PC-3 (cell line): ENCODE measurements at regions of chr10 and their contacts with region 1.

Region 1: GRCh38 chr10:63707254-63707910 is 186.2 kb downstream of the REEP3 start:
- DNase-seq: peak; percentile 100
- ATAC-seq: peak; percentile 70
- H3K4me3 ChIP-seq: no peak overlapping the region
- H3K27ac ChIP-seq: peak overlapping the region; percentile 76
- H3K4me1 ChIP-seq: peaks cover 62% of the 10 kb centered on the region
- H3K27me3 ChIP-seq: no peaks in the 10 kb centered on the region
- CTCF ChIP-seq: no peak

Region 2: DNA sequence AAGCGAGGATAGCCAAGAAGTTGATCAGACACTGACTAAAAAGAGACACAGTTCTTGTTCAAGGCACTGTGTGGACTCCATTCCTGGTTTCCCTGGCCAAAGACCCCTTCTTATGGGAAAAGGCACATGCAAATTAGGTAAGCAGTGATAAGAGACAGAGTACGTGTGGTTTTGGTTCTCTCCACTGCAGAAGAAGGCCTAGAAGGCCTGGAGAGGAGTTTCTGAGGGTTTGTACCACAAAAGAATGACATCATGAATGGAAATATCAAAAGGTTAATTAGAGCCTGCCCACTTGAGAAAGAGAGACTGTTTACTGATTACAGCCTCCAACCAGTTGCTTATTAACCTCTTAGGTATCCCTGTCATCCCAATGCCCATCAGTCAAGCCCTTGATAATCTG is 1195.7 kb before region 1 on chr10:
- CTCF ChIA-PET with region 1: no interaction called
- POLR2A ChIA-PET with region 1: no interaction called
- intact Hi-C with region 1: no loop called
- DNase-seq: no peak
- ATAC-seq: no peak
- H3K4me3 ChIP-seq: no peak overlapping the region
- H3K27ac ChIP-seq: no peak overlapping the region
- H3K4me1 ChIP-seq: peaks cover 14% of the 10 kb centered on the region
- H3K27me3 ChIP-seq: no peaks in the 10 kb centered on the region
- CTCF ChIP-seq: no peak

Region 3: DNA sequence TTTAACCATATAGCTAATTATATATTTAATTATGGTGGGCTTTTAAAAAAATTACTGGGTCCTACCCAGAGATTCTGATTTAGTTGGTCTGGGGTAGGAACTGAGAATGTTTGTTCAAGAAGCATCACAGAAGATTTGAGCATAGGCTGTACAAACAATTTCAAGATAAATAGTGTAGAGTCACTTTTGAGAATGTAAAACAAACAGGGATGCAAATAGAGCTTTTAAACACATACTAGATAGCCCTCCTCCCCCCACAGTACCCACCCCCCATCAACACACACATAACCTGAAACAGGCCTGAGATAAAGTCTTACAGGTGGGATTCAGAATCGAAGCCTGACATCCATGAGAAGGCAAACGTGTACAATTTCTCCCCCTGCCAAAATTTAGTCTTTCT is 201.8 kb before region 1 on chr10:
- CTCF ChIA-PET with region 1: interaction called, 10 read pairs
- POLR2A ChIA-PET with region 1: no interaction called
- intact Hi-C with region 1: no loop called
- DNase-seq: no peak
- ATAC-seq: peak; percentile 53
- H3K4me3 ChIP-seq: no peak overlapping the region
- H3K27ac ChIP-seq: no peak overlapping the region
- H3K4me1 ChIP-seq: peaks cover 11% of the 10 kb centered on the region
- H3K27me3 ChIP-seq: no peaks in the 10 kb centered on the region
- CTCF ChIP-seq: no peak

Region 4: DNA sequence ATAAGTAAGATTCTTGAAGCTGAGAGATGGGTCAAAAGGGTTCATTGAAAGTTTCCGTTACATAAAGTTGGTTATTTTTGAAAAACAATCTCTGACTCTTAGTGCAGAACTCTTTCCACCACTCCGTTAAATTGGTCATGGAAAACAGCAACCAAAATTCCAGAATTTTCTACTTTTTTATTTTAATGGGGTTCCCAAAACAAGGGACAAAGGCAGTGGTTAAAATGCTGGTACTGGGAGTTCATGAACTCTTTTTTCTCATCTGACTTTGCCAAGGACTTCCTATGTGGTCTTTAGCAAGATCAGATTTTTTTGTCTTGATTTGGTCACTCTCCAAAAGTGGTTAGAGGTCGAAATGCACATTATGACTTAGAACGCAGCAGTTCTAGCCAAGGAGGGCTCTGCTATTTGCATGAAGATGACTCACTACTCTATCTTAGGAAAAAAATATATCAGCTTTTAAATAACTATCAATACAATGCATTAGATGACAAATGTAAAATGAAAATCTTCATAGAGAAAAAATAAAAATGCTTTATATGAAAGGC is 40.5 kb before region 1 on chr10:
- CTCF ChIA-PET with region 1: interaction called, 5 read pairs
- POLR2A ChIA-PET with region 1: interaction called, 5 read pairs
- intact Hi-C with region 1: loop called (anchors 1 kb)
- DNase-seq: peak; percentile 96
- ATAC-seq: peak; percentile 58
- H3K4me3 ChIP-seq: no peak overlapping the region; the same call in 1 of the 2 replicates
- H3K27ac ChIP-seq: peak overlapping the region; percentile 51
- H3K4me1 ChIP-seq: peaks cover 39% of the 10 kb centered on the region
- H3K27me3 ChIP-seq: no peaks in the 10 kb centered on the region
- CTCF ChIP-seq: no peak